ENCODE measurements at regions of chr1 and their contacts with region 1.

Region 1: DNA sequence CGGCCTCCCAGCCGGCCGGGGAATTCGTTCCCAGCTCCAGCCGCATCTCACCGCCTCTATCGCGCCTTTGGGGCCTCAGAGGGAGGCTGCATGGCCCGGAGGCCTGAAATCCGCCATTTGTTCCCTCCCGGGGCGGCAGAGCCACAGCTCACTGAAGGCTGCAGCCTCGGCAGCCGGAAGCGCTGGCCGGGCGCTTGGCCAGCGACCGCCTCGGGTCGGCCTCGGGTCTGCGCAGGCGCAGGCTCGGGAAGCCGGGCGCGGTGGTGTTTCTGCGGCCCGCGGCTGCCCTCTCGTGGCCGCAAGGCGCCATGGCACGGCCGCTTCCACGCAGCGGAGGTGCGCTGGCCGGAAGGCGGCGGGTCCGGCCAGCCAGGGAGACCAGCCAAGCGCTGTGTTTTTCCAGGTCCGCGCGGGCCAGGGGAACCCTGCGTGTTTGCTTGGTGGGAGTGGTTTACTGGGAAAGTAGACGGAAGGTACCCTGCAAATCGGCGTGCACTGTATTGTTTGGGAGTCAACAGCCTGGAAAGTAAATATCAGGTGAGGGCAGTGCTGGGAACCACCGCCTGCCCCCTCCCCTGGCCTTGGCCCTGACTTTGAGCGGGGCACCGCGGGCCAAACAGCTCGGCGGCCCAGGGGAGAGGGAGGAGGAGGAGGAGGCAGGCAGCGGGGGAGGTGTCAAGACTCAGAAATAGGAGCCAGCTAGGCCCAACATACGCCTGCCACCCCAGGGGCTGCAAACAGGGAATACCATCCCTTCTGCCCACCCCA is 52.7 kb upstream of the CD34 start:
- DNase-seq: peak; percentile 46
- H3K4me3 ChIP-seq: peak overlapping the region; percentile 63
- H3K27ac ChIP-seq: no peak overlapping the region
- H3K27me3 ChIP-seq: no peaks in the 10 kb centered on the region
- CTCF ChIP-seq: peak; percentile 84

Region 2: DNA sequence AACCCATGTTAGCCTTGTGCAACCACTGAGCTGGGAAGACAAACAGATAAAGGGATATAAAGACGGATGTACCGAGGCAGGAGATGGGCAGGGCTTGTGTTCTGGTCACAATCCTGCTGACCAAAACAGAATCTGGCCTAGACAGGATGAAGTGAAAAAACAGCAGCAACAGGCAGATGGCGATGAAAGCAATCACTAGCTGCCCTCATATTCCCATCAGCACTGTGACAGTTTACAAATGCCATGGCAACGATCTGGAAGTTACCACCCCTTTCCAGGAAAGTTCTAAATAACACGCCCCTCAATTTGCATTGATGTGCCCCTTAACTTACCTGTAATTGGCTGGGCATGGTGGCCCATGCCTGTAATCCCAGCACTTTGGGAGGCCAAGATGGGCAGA is 252.3 kb before region 1 on chr1:
- CTCF ChIA-PET with region 1: interaction called, 14 read pairs
- POLR2A ChIA-PET with region 1: no interaction called
- DNase-seq: no peak
- H3K4me3 ChIP-seq: no peak overlapping the region
- H3K27ac ChIP-seq: no peak overlapping the region
- H3K27me3 ChIP-seq: no peaks in the 10 kb centered on the region
- CTCF ChIP-seq: no peak

Region 3: DNA sequence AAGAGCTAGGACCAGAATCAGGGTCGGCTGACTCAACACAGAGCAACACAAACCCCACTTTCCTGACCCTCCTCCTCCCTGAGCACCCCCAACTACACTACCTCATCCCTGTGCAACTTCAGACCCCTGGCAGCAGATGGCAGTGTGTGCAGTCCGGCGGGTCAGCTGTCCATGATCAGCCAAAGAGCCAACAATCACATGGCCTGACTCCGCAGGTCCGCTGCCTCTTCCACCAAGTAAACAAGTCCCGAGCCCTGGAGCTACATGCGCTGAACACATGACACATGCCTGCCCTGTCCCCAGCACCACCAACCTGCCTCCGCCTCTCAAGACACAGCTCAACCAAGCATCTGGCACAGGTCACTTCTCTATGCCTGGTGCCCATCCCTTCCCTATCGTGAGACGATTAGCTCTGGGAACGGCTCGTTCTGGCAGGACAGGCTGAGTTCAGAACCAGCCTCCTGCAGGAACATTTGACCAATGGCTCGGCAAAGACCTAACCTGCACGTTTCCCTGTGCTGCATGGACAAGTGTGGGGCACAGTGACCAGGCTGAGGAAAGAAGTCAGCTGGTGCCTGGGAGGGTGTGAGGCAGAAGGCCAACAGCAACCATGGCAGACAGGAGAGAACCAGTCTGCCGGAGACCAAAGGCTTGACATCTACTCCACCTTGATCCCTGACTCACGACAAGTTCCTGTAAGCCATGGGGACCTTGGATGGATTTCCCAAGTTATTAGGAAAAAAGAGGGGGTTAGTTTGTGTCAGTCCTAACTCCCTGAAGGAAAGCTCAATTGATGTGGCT is 151.5 kb before region 1 on chr1:
- CTCF ChIA-PET with region 1: interaction called, 19 read pairs
- POLR2A ChIA-PET with region 1: no interaction called
- DNase-seq: no peak
- H3K4me3 ChIP-seq: no peak overlapping the region
- H3K27ac ChIP-seq: no peak overlapping the region
- H3K27me3 ChIP-seq: no peaks in the 10 kb centered on the region
- CTCF ChIP-seq: peak; percentile 45

Region 4: GRCh38 chr1:207863893-207864535 is 99.6 kb before region 1 on chr1:
- CTCF ChIA-PET with region 1: interaction called, 36 read pairs
- POLR2A ChIA-PET with region 1: interaction called, 5 read pairs
- DNase-seq: no peak
- H3K4me3 ChIP-seq: no peak overlapping the region
- H3K27ac ChIP-seq: no peak overlapping the region
- H3K27me3 ChIP-seq: no peaks in the 10 kb centered on the region
- CTCF ChIP-seq: no peak

Region 5: GRCh38 chr1:207897188-207897587 is 66.4 kb before region 1 on chr1:
- CTCF ChIA-PET with region 1: interaction called, 102 read pairs
- POLR2A ChIA-PET with region 1: interaction called, 7 read pairs
- DNase-seq: no peak
- H3K4me3 ChIP-seq: no peak overlapping the region
- H3K27ac ChIP-seq: no peak overlapping the region
- H3K27me3 ChIP-seq: no peaks in the 10 kb centered on the region
- CTCF ChIP-seq: peak; percentile 42

Region 6: GRCh38 chr1:207973898-207974568 is 10.4 kb after region 1 on chr1:
- CTCF ChIA-PET with region 1: interaction called, 33 read pairs
- POLR2A ChIA-PET with region 1: no interaction called
- DNase-seq: no peak
- H3K4me3 ChIP-seq: no peak overlapping the region
- H3K27ac ChIP-seq: no peak overlapping the region
- H3K27me3 ChIP-seq: peaks cover 23% of the 10 kb centered on the region
- CTCF ChIP-seq: no peak

Region 7: DNA sequence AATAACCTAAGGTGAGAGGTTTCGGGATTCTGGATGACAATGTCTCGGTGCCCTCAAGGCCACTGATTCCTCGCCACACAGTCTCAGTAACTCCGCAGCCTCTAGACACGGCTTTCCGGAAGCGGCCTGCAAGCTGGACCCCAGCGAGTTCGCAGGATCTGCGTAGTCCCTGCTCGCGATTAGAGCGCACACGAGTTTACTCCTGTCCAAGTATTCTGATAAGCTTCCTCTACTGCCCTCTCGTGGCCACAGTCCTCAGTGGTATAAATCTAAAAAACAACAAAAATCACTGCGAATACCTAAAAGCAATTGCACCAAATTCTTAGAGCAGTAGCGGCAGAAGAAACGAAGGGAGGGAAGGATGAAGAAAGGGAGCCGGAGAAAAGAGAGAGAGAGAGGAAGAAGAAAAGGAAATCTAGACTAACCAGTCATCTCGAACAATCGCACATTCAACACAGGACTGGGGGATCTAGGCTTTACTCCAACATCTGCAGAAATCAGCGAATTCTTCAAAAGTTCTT is 281.6 kb after region 1 on chr1:
- CTCF ChIA-PET with region 1: interaction called, 12 read pairs
- POLR2A ChIA-PET with region 1: no interaction called
- DNase-seq: peak; percentile 78
- H3K4me3 ChIP-seq: 0 out of 2 replicates have a peak overlapping the region, but pooled peaks have one; percentile 20
- H3K27ac ChIP-seq: peak overlapping the region; percentile 21
- H3K27me3 ChIP-seq: peaks cover 30% of the 10 kb centered on the region
- CTCF ChIP-seq: peak; percentile 77